B cell (primary cell): ENCODE measurements at regions of chr3 and their contacts with region 1.

Region 1: DNA sequence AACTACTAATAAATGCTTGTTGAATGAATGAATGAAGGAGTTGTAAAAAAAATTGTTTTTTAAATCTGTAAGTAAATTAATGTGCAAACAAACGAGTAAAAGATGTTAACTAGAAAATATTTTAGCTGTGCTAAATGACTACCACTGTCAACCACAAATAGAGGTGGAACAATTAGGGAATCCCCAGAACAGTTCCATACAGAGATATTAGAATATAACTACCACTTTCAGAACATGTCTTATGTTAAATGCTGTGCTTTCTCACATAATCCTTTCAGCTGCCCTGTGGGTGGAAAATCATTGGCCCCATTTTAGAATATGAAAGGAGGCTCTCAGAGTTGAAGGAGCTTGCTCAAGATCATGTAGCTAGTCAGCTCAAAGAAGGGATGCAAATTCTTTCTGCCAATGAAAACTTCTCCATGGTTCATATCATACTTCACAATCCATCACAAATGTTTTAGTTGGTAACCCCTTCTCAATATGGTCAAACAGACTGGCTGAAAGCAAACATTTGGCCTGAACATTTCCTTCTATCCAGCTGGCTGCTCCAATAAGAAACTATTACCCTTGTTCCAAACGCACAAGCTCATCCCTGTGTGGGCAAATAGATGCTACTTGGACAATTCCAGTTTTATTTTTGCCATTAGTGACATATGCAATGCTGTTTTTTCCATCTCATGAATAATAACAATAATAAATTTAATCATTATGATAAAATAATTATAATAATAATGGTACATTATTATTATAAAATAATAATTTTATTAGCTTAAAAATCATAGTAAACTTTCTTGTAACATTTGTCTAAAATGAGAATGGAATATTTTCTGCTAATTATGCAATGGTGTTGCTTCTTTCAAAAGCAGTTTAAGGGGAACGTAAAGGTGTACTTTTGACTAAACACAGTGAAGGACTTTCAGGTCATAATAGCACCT is 290.4 kb upstream of the STT3B start:
- DNase-seq: no peak
- ATAC-seq: no peak
- H3K4me3 ChIP-seq: no peak overlapping the region
- H3K4me3 Mint-ChIP-seq: no peak overlapping the region
- H3K27ac ChIP-seq: no peak overlapping the region
- H3K27ac Mint-ChIP-seq: no peak overlapping the region
- H3K4me1 ChIP-seq: no peaks in the 10 kb centered on the region
- H3K4me1 Mint-ChIP-seq: no peaks in the 10 kb centered on the region
- H3K27me3 ChIP-seq: no peaks in the 10 kb centered on the region
- H3K27me3 Mint-ChIP-seq: peaks cover 14% of the 10 kb centered on the region
- CTCF ChIP-seq: no peak

Region 2: DNA sequence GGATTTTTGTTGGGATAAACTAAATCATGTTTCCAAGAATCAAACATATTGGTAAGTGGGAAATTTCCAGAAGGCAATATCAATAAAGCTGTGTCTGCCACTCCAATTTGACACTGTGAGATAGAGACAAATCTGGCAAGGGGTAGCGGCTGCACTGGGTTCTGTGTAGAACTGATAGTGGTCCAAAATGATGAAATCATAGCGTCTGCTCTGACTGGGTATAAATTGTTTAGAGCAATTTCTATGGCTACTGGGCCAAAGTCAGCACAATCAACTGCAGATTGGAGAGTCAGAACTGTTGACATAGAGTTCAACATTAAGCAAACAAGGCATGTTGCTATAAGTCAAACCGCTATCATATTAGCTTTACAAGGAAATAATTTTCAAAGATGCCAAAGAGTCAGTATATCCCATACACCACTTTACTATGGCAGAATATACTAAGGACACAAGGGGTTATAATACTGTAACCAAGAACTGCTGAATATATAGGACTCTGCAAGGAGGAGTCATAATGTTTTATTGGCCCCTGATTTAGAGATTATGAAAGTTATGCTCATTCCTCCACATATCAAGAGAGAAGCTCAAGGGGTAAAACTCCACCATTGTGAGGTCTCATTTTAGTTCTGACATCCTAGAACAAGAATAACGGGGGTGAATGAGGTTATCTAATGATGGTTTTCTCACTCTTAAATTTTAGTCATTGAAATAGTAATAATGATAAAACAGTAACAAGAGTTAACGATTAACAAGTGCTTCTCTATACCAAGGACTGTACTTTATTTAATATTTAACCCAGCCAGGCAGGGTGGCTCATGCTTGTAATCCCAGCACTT is 38.1 kb before region 1 on chr3:
- CTCF ChIA-PET with region 1: no interaction called
- POLR2A ChIA-PET with region 1: no interaction called
- intact Hi-C with region 1: loop called (anchors 5 kb)
- DNase-seq: no peak
- ATAC-seq: no peak
- H3K4me3 ChIP-seq: no peak overlapping the region
- H3K4me3 Mint-ChIP-seq: no peak overlapping the region
- H3K27ac ChIP-seq: no peak overlapping the region
- H3K27ac Mint-ChIP-seq: no peak overlapping the region
- H3K4me1 ChIP-seq: no peaks in the 10 kb centered on the region
- H3K4me1 Mint-ChIP-seq: no peaks in the 10 kb centered on the region
- H3K27me3 ChIP-seq: no peaks in the 10 kb centered on the region
- H3K27me3 Mint-ChIP-seq: no peaks in the 10 kb centered on the region
- CTCF ChIP-seq: no peak

Region 3: DNA sequence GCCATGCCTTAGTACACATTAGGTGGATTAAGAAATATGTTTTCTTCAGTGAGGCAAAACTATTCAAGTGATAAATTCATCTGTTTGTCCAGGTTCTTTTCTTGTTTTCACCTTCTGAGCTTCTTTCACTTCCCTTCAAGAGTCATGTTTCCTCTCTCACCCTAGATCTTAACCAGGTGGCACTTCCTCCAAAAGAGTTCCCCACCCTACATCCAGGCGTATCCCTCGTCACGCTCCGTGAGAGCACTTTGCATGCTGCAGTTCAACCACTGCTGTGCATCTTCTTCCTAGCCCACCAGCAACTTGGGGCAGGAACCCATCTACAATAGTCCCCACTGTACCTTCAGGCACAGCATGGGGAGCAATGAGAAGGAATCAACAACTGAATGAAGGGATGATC is 709.9 kb after region 1 on chr3:
- CTCF ChIA-PET with region 1: no interaction called
- POLR2A ChIA-PET with region 1: no interaction called
- intact Hi-C with region 1: no loop called
- DNase-seq: peak; percentile 90
- ATAC-seq: peak; percentile 84
- H3K4me3 ChIP-seq: peak overlapping the region in 2 of 5 experiments; percentile 35 to 52
- H3K4me3 Mint-ChIP-seq: peak overlapping the region; percentile 80
- H3K27ac ChIP-seq: peak overlapping the region; percentile 88
- H3K27ac Mint-ChIP-seq: peak overlapping the region; percentile 96
- H3K4me1 ChIP-seq: peaks cover 88 to 90% of the 10 kb centered on the region in 2 donors
- H3K4me1 Mint-ChIP-seq: peaks cover 88% of the 10 kb centered on the region
- H3K27me3 ChIP-seq: no peaks in the 10 kb centered on the region
- H3K27me3 Mint-ChIP-seq: no peaks in the 10 kb centered on the region
- CTCF ChIP-seq: no peak